ENCODE measurements at regions of chr4 and their contacts with region 1.

Region 1: GRCh38 chr4:153791746-153792617 is 3.1 kb upstream of the SFRP2 start:
- DNase-seq: peak; percentile 79

Region 2: DNA sequence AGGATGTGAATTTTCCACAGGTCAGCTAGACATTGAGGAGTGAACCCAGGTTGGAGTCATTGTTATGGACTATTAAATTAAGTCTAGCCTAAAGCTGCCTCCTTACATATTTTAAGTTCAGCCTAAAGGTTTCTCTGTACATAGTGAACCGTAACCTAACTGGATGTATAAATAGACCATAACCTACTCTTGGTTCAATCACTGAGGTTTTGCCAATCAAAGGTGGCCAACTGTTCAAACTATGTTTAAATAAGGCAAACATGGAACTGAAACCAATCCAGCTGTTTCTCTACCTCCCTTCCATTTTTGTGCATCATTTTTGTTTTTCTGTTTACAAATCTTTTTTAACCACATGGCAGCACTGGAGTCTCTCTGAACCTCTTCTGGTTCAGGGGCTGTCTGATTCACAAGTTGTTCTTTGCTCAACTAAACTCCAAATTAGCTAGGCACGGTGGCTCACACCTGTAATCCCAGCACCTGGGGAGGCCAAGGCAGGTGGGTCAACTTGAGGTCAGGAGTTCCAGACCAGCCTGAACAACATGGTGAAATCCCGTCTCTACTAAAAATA is 40.8 kb after region 1 on chr4:
- intact Hi-C with region 1: no loop called
- DNase-seq: no peak

Region 3: DNA sequence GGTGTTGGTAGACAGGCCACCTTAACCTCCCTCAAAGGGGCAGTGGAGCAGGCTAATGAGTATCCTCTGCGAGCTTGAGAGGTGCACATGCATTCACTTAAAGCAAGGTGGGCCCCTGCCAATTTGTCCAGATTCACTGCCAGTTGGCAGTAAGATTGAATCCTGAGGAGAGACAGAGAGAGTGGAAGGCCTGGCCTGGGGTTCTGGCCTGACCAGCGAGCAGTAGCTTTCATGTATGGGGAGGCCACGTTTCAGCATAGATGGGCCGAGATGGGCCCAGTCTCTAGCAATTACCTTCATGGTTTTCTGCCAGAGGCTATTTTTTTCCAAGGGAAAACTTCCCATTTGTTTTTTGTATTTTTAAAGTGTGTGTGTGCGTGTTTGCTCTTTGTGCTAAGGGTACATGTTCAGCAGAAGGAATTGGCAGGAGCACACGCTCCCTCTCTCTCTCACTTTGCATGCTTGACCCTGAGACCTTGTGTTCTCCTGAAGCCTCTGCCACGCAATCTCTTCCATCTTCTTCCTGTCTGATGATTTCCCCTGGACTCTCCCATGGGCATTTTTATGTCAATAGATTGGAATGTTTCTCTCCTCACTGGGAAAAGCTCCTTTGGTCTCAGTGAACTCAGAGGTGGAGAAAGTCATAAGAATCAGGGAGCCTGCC is 212.7 kb after region 1 on chr4:
- intact Hi-C with region 1: loop called (anchors 10 kb)
- DNase-seq: no peak